Panc1 (cell line): ENCODE measurements at regions of chr17 and their contacts with region 1.

Region 1: DNA sequence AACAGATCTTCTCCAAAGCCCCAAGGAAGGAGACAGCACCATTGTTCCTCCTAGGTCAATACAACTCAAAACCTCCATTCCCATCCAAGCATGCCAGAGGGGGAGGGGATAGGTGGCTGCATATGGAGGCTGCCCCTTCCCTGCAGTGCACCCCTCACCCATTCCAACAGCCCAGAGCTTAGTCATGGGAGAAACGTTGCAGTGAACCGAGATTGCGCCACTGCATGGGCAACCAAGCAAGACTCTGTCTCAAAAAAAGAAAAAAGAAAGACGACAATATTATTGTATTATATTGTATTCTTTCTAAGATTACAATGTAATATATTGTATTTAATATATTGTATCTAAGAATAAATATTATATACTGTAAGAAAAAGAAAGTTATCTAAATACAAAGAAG is 36.4 kb upstream of the CD300E start:
- DNase-seq: no peak
- ATAC-seq: no peak
- H3K4me3 ChIP-seq: no peak overlapping the region
- H3K27ac ChIP-seq: no peak overlapping the region
- H3K4me1 ChIP-seq: no peaks in the 10 kb centered on the region
- H3K27me3 ChIP-seq: peaks cover 36% of the 10 kb centered on the region
- CTCF ChIP-seq: no peak

Region 2: GRCh38 chr17:74601944-74602572 is 57.8 kb before region 1 on chr17:
- CTCF ChIA-PET with region 1: no interaction called
- POLR2A ChIA-PET with region 1: no interaction called
- in situ Hi-C with region 1: no loop called
- intact Hi-C with region 1: loop called (anchors 10 kb)
- DNase-seq: peak; percentile 33
- ATAC-seq: peak; percentile 80
- H3K4me3 ChIP-seq: no peak overlapping the region
- H3K27ac ChIP-seq: no peak overlapping the region
- H3K4me1 ChIP-seq: 0 out of 2 replicates have a peak, but pooled peaks cover 3% of the 10 kb centered on the region
- H3K27me3 ChIP-seq: no peaks in the 10 kb centered on the region; the same call in 1 of the 2 replicates
- CTCF ChIP-seq: peak; percentile 92

Region 3: DNA sequence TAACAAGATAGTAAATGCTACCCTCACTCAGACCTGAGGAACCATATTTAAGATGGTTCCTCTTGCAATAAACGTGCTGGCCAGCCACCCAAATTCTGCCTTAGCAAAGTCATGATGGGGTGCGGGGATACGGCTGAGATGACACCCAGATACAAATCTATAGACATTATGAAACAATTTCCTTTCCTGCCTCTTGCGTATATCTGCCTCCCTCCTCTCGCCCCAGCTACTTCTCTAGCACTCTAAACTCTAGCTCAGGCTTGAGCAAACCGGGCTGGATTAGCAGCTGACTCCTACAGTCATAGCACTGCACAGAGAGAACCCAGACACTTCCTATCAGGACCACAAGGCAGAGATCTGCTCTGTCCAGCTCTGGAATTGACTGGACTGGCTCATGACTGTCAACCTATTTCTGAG is 30.5 kb after region 1 on chr17:
- CTCF ChIA-PET with region 1: no interaction called
- POLR2A ChIA-PET with region 1: interaction called, 11 read pairs
- in situ Hi-C with region 1: no loop called
- intact Hi-C with region 1: no loop called
- DNase-seq: no peak
- ATAC-seq: no peak
- H3K4me3 ChIP-seq: no peak overlapping the region
- H3K27ac ChIP-seq: no peak overlapping the region
- H3K4me1 ChIP-seq: no peaks in the 10 kb centered on the region
- H3K27me3 ChIP-seq: peaks cover 8% of the 10 kb centered on the region
- CTCF ChIP-seq: no peak

Region 4: DNA sequence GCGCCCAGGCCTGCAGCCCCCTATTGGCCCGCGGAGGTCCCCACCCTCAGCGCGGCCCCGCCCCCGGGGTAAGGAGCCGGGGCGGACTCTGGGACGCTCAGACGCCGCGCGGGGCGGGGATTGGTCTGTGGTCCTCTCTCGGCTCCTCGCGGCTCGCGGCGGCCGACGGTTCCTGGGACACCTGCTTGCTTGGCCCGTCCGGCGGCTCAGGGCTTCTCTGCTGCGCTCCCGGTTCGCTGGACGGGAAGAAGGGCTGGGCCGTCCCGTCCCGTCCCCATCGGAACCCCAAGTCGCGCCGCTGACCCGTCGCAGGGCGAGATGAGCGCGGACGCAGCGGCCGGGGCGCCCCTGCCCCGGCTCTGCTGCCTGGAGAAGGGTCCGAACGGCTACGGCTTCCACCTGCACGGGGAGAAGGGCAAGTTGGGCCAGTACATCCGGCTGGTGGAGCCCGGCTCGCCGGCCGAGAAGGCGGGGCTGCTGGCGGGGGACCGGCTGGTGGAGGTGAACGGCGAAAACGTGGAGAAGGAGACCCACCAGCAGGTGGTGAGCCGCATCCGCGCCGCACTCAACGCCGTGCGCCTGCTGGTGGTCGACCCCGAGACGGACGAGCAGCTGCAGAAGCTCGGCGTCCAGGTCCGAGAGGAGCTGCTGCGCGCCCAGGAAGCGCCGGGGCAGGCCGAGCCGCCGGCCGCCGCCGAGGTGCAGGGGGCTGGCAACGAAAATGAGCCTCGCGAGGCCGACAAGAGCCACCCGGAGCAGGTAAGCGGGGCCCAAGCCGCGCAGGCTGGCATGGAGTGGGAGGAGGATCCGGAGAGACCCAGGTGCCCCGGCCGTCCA is 88.8 kb after region 1 on chr17 and contains the start of gene NHERF1:
- CTCF ChIA-PET with region 1: interaction called, 15 read pairs
- POLR2A ChIA-PET with region 1: no interaction called
- in situ Hi-C with region 1: no loop called
- intact Hi-C with region 1: no loop called
- DNase-seq: no peak
- ATAC-seq: peak; percentile 95
- H3K4me3 ChIP-seq: peak within 1 kb of the TSS; percentile 76 to 95
- H3K27ac ChIP-seq: peak within 1 kb of the TSS; percentile 87
- H3K4me1 ChIP-seq: peaks cover 38% of the 10 kb centered on the region
- H3K27me3 ChIP-seq: no peaks in the 10 kb centered on the region
- CTCF ChIP-seq: no peak
- total RNA-seq, gene NHERF1: 90.8 TPM

Region 5: DNA sequence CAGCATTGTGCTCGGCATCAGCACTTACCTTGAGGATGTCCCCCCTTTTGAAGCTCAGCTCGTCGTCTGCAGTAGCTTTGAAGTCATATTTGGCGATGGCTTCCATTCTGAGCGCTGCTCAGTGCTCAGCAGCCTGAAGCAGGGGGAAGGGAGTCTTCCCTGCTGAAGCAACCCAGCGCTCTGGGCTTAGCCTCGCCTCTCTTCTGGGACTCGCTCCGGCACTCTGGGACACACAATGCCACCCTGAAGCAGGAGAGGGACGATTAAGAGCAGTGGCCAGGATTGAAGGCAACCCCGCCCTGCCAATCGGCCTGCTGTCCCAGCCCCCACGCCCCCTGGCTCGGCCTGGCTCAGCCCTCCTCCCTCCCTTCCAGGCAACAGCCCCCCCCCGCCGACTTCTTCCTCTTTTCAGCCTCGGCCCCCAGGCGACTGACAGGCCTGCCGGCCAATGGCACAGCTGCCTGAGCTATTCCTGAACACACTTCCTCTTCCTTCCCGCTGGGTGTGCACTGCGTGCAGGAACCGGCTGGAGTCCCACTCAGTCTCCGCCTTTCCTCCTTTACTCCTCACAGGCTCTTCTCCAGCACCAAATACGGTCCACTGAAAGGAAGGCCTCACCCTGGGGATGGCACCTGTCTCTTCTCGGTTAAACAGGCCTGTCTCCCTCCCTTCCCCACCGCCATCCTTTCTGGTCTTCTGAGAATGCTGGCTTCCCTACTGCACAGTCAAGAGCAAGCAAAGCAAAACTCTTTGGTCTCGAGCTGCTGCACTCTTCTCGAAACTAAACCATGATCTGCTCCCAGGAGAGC is 733.8 kb after region 1 on chr17:
- CTCF ChIA-PET with region 1: no interaction called
- POLR2A ChIA-PET with region 1: interaction called, 15 read pairs
- in situ Hi-C with region 1: no loop called
- intact Hi-C with region 1: no loop called
- DNase-seq: peak; percentile 77
- ATAC-seq: peak; percentile 99
- H3K4me3 ChIP-seq: peak overlapping the region; percentile 74 to 82
- H3K27ac ChIP-seq: peak overlapping the region; percentile 93
- H3K4me1 ChIP-seq: peaks cover 47% of the 10 kb centered on the region
- H3K27me3 ChIP-seq: no peaks in the 10 kb centered on the region
- CTCF ChIP-seq: no peak